ENCODE measurements at regions of chr1 and their contacts with region 1.

Region 1: DNA sequence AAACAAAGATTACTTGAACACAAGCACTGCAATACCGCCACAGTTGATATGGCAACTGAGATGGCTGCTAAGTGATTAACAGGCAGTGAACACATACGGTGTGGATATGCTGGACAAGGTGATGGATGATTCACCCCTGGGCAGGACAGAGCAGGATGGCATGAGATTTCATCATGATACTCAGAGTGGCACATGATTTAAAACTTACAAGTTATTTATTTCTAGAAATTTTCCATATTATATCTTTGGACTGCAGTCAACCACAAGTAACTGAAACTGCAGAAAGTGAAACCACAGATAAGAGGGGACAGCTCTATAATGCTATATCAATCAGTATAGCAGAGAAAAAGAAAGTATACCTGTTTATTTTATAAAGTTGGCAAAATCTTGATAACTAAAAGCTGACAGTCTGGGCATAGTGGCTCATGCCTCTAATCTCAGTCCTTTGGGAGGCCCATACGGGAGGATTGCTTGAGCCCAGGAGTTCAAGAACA is 47.9 kb downstream of the PHACTR4 start:
- DNase-seq: peak; percentile 81
- H3K27ac ChIP-seq: peak overlapping the region; percentile 94
- CTCF ChIP-seq: no peak

Region 2: DNA sequence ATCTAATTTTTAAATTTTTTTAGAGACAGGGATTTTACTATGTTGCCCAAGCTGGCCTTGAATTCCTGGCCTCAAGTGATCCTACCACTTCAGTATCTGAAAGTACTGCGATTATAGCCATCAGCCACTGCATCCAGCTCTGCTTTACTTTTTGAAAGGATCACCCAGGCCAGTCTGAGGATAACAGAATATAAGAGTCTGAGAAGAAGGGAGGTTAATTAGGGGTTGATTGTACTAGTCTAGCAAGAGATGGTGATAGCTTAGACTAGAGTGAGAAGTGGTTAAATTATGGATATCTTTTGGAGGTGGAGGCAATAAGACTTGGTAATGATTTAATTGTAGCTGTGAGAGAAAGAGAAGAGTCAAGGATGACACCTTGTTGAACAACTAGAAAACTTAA is 15.7 kb before region 1 on chr1:
- CTCF ChIA-PET with region 1: no interaction called
- POLR2A ChIA-PET with region 1: no interaction called
- DNase-seq: no peak
- H3K27ac ChIP-seq: no peak overlapping the region
- CTCF ChIP-seq: no peak

Region 3: DNA sequence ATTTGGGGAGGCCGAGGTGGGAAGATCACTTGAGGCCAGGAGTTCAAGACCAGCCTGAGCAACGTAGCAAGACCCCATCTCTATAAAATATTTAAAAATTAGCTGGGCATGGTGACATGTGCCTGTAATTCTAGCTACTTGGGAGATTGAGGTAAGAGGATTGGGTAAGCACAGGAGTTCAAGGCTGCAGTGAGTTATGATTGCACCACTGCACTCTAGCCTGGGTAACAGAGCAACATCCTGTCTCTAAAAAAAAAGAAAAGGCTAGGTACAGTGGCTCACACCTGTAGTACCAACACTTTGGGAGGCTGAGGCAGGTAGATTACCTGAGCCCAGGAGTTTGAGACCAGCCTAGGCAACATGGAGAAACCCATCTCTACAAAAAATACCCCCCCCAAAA is 52.7 kb after region 1 on chr1:
- CTCF ChIA-PET with region 1: no interaction called
- POLR2A ChIA-PET with region 1: interaction called, 10 read pairs
- DNase-seq: no peak
- H3K27ac ChIP-seq: peak overlapping the region; percentile 58
- CTCF ChIP-seq: no peak

Region 4: DNA sequence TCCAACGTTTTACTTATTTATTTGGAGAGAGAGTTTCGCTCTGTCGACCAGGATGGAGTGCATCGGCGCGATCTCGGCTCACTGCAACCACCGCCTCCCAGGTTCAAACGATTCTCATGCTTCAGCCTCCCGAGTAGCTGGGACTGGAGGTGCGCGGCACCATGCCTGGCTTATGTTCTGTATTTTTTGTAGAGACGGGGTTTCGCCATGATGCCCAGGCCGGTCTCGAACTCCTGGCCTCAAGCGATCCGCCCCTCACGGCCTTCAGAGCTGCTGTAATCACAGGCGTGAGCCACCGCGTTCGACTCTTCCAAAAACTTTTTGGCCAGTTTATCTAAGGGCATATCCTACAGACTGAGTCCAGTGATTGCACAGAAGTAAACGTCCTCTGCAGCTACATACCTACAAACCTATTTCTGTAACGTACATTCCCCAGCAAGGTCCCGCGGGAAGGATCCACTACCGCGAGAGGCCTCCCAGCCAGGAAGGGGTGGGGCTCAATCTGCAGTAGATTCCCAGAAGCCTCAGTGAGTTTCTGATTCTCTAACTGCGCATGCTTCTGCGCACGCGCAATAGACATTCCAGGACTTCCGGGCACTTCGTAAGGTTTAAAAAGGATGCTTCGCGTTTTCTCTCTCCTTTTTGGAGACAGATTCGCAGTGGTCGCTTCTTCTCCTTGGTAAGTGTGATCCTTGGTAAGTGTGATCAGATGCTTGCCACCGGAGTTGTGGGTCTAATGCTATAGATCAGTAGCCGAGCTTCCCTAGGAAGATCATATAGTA is 88.1 kb after region 1 on chr1 and contains the start of gene RCC1:
- CTCF ChIA-PET with region 1: no interaction called
- POLR2A ChIA-PET with region 1: interaction called, 15 read pairs
- DNase-seq: peak; percentile 99
- H3K27ac ChIP-seq: peak within 1 kb of the TSS; percentile 97
- CTCF ChIP-seq: no peak